Adrenal gland (tissue), 19 donors: ENCODE measurements at regions of chr2 and their contacts with region 1.

Region 1: DNA sequence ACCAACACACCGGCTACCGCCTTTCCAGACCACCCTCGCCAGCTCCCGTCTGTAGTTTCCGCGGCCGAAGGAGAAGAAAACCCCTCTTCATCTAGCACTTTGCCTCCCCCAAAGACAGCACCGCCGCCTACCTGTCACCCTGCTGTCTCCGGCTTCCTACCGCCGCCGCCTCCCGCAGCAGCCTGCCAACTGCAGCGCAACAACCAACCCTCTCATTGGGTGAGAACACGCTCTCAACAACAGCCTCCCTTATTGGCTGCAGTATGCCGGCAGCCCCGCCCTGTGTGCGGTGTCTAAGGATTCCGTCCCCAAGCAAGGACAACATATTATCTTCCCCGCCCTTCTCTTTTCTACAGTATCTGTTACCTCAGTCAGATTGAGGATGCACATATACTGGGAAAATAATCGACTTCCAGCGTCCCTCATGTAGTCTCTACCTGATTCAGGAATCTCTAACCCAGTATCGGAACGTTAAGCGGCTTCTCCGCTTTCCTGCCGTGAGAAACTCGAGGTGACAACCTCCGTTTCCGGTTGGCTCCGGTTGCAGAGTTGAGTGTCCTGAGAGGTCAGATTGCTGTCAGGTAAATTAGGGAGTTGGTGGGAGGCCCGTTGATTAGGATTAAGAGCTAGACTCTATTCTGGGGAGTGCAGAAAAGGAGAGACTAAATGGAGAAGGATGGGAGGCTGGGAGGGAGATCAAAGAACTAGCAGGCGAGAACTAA is at the starts of genes HYCC2 and NDUFB3:
- DNase-seq: peak; percentile 92 to 97 (median 94)
- H3K4me3 ChIP-seq: peak within 1 kb of the TSS; percentile 81 to 98 (median 92)
- H3K27ac ChIP-seq: peak within 1 kb of the TSS; percentile 73 to 96 (median 82)
- H3K4me1 ChIP-seq: peaks cover 32 to 53% of the 10 kb centered on the region in 2 donors
- H3K27me3 ChIP-seq: no peaks in the 10 kb centered on the region
- CTCF ChIP-seq: peak in 4 of 6 experiments; percentile 10 to 39 (median 28)
- POLR2A ChIP-seq: peak; percentile 31 to 87
- total RNA-seq, gene HYCC2: 5.8 to 36.6 (median 22.2) TPM
- total RNA-seq, gene NDUFB3: 34.5 to 193 (median 102) TPM

Region 2: GRCh38 chr2:201135411-201135810 is 63.8 kb after region 1 on chr2:
- intact Hi-C with region 1: no loop called
- DNase-seq: no peak
- H3K4me3 ChIP-seq: no peak overlapping the region
- H3K27ac ChIP-seq: peak overlapping the region in 4 of 5 donors; percentile 3 to 66 (median 65)
- H3K4me1 ChIP-seq: peaks cover 37 to 58% of the 10 kb centered on the region in 2 donors
- H3K27me3 ChIP-seq: no peaks in the 10 kb centered on the region
- CTCF ChIP-seq: no peak
- POLR2A ChIP-seq: no peak

Region 3: DNA sequence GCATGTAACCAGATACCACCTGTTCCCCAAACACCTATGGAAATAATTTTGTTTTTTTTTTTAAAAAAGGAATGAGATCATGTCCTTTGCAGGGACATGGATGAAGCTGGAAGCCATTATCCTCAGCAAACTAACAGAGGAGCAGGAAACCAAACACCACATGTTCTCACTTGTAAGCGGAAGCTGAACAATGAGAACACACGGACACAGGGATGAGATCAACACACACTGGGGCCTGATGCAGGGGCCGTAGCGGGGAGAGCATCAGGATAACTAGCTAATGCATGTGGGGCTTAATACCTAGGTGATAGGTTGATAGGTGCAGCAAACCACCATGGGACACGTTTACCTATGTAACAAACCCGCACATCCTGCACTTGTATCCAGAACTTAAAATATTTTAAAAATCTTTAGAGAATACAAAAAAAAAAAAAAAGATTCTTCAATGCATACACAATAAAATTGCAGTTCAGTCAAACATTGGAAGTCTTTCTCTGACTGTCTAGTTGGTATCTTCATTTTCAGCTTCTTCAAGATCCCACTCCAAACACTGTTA is 99.7 kb after region 1 on chr2:
- intact Hi-C with region 1: loop called in 1 of 2 experiments (anchors 10 kb)
- DNase-seq: no peak
- H3K4me3 ChIP-seq: no peak overlapping the region
- H3K27ac ChIP-seq: no peak overlapping the region
- H3K4me1 ChIP-seq: no peaks in the 10 kb centered on the region
- H3K27me3 ChIP-seq: no peaks in the 10 kb centered on the region
- CTCF ChIP-seq: no peak
- POLR2A ChIP-seq: no peak

Region 4: DNA sequence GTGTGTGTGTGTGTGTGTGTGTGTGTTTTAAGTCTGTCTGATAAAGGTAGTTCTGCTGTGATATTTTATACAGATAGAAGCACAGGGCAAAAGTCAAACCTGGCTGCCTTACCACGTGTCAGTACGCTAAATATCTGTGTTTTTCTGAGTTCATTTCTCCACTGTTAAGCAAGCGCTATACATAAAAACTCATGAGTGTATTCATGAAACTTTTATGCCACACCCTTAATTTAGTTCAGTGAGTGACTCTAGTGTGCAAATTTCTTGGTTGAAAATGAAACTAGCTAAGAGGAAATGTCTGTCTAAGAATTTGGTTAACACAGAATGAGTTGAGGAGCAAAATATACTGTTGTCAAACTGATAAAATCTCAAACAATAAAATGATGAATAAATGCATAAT is 122.5 kb after region 1 on chr2:
- intact Hi-C with region 1: no loop called
- DNase-seq: no peak
- H3K4me3 ChIP-seq: no peak overlapping the region
- H3K27ac ChIP-seq: no peak overlapping the region
- H3K4me1 ChIP-seq: peaks cover 0 to 16% of the 10 kb centered on the region in 2 donors
- H3K27me3 ChIP-seq: no peaks in the 10 kb centered on the region
- CTCF ChIP-seq: no peak
- POLR2A ChIP-seq: no peak

Region 5: GRCh38 chr2:201440182-201440581 is 368.5 kb after region 1 on chr2:
- intact Hi-C with region 1: no loop called
- DNase-seq: no peak
- H3K4me3 ChIP-seq: no peak overlapping the region
- H3K27ac ChIP-seq: no peak overlapping the region
- H3K4me1 ChIP-seq: peaks cover 9 to 17% of the 10 kb centered on the region in 2 donors
- H3K27me3 ChIP-seq: no peaks in the 10 kb centered on the region
- CTCF ChIP-seq: no peak
- POLR2A ChIP-seq: no peak